ENCODE measurements at regions of chr6 and their contacts with region 1.

Region 1: DNA sequence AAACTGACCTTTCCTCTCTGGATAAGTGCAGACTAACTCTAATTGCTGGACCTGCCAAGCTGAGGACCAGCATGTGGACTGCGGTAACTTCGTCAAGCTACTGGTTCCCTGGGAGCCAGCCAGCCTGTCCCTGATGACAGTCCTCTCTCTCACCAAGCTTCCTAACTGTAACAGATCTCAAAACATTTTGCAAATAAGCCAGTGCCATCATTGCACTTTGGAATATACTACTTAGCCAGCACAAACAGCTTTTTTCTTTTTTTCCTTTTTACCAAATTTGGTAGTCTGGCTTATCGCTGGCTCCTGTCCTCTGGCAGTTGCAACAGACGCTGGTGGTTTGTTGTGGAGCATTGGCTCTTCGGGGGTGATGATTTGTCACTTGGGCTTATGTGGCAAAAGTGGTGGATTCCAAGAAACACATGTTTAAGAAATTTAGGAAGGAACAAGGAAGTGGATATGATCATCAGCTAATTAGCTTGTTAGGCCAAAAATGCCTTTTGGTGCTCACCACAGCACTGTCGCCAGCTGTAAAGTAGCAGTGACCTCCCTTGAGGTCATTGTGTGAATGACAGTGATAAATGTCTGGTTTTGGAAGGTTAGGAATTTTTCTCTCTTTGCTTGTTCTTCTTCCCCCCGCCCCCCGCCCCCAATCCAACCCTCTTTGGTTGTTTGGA is 171.7 kb downstream of the CLIC5 start:
- DNase-seq: no peak
- ATAC-seq: no peak
- H3K4me3 ChIP-seq: no peak overlapping the region
- H3K27ac ChIP-seq: no peak overlapping the region
- H3K4me1 ChIP-seq: peaks cover 9% of the 10 kb centered on the region; the same call in 1 of the 2 replicates
- H3K27me3 ChIP-seq: no peaks in the 10 kb centered on the region
- CTCF ChIP-seq: no peak

Region 2: GRCh38 chr6:45916692-45917091 is 72.7 kb after region 1 on chr6:
- CTCF ChIA-PET with region 1: no interaction called
- POLR2A ChIA-PET with region 1: interaction called, 12 read pairs
- intact Hi-C with region 1: no loop called
- DNase-seq: no peak
- ATAC-seq: no peak
- H3K4me3 ChIP-seq: no peak overlapping the region
- H3K27ac ChIP-seq: no peak overlapping the region
- H3K4me1 ChIP-seq: peaks cover 8% of the 10 kb centered on the region; the same call in 1 of the 2 replicates
- H3K27me3 ChIP-seq: no peaks in the 10 kb centered on the region
- CTCF ChIP-seq: no peak

Measured in PC-3 (cell line).